Left colon (tissue), 2 donors: ENCODE measurements at regions of chr3 and their contacts with region 1.

Region 1: DNA sequence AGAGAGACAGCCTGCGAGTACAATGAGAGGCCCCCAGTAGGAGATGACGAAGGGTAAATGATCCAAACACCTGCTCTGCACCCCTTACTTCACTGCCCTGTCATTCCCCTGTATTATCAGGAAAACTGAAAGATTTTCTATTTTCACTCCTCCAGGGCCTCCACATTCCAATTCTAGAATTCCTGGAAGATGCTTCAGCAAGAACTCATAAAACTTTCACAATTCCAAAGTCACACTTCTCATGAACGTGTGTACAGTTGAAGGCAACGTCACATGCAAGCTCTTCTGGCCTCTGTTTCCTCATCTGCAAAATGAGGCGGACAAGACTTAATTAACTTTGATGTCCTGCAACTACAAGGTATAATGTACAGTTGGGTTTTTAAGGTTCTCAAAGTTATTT is 62.8 kb upstream of the SPATA12 start:
- DNase-seq: no peak
- ATAC-seq: no peak

Region 2: DNA sequence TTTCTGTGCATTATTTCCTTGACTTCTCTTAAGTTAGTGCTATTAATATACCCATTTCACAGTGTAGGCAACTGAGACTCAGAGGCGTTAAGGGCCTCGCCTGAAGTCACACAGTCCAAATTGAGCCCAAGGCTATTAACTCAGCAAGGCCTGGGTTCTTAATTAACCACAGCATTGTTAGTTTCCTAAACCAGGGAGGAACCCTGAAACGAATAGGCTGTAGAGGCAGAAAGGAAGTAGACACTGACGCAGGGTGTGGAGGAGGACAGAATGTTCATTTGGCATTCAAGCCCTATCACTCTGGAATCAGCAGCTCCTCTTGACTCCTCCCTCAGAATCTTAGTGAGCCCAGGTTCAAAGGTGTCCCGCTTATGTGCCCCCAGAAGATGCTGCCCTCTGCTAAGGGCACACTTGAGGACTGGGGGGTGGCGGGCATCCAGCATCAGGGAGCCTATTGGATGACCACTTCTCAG is 209.9 kb before region 1 on chr3:
- intact Hi-C with region 1: no loop called
- DNase-seq: no peak
- ATAC-seq: no peak

Region 3: GRCh38 chr3:57078344-57078634 is 80.6 kb after region 1 on chr3:
- intact Hi-C with region 1: loop called in 1 of 2 experiments (anchors 5 kb)
- DNase-seq: peak; percentile 62 to 68
- ATAC-seq: peak; percentile 77

Region 4: DNA sequence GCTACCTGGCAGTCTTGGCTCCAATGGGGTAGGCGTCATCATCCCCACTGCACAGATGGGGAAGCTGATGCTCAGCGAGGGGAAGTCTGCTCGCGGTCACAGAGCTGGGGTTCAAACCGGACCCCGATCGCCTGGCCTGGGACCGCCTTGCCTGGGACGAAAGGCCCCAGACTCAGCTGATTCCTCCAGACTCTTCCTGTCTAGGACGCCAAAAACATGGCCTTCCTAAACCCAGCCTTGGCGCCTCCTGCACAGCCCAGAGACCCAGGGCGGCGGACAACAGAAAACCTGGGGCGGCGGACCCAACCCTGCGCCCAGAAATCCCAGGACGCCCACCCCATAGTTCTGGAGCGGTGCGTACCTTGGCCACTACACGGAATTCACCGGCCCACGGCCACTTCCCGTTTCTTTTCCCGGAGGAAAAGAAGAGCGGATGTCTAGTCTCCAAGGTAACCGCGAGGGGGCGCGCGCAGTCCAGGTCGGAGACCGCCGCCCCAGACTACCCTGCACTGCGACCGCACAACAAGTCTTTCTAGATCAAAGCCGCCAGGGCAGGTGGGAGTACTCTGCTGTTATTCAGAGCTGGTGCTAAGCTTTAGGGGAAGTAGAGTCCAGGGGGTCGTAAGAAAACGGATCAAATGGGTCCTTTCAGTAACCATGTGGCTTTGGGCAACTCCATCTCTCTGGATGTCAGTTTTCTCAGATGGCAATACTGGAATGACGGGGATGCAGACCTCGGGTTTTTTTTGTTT is 172.4 kb after region 1 on chr3:
- intact Hi-C with region 1: no loop called
- DNase-seq: peak; percentile 58 to 74
- ATAC-seq: peak; percentile 87

Region 5: DNA sequence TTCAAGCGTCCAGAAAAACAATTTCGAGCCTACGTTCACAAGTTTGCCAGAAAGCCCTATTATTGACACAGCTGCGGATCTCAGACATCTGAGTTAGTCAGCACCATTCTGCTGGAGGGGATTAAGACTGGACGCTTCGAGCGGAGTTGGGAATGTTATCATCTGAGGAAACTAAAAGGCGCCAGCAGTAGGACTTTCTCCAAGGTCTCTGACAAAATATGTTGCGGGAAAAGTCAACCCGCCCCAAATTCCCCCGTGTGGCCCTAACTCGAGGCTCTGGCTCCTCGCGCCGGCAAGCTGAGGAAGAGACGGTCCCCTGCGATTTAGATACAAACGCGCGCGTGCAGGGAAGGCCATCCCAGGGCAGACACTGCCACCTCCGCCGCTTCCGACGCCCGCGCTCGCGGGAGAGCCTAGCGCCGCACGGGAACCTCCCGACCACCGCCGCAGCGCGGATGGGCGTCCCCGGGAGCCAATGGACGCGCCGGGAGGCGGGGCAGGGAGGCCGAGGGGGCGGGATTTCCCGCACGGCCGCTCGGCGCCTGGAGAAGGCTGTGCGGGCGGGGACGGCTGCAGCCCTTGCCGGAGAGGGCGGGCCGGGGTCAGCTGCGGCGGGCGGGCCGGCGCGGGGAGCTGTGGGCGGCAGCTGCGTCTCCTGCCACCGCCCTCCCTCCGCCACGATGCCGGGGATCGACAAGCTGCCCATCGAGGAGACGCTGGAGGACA is 229.7 kb after region 1 on chr3 and contains the start of gene APPL1:
- intact Hi-C with region 1: loop called in 1 of 2 experiments (anchors 10 kb)
- DNase-seq: peak; percentile 91 to 94
- ATAC-seq: peak; percentile 88
- total RNA-seq, gene APPL1: 25.7 to 38.8 TPM